Mammary epithelial cell (primary cell): ENCODE measurements at regions of chr17 and their contacts with region 1.

Region 1: GRCh38 chr17:69523244-69523861 is 108.9 kb downstream of the MAP2K6 start:
- DNase-seq: peak; percentile 44
- H3K4me3 ChIP-seq: no peak overlapping the region
- H3K27ac ChIP-seq: no peak overlapping the region
- H3K4me1 ChIP-seq: no peaks in the 10 kb centered on the region
- H3K27me3 ChIP-seq: no peaks in the 10 kb centered on the region
- CTCF ChIP-seq: peak; percentile 72 to 85

Region 2: GRCh38 chr17:68771867-68772515 is 751.4 kb before region 1 on chr17:
- CTCF ChIA-PET with region 1: no interaction called
- dilution Hi-C with region 1: no loop called
- in situ Hi-C with region 1: no loop called
- intact Hi-C with region 1: loop called (anchors 1 kb)
- DNase-seq: peak; percentile 39
- H3K4me3 ChIP-seq: peak overlapping the region in 2 of 3 experiments; percentile 8 to 23
- H3K27ac ChIP-seq: no peak overlapping the region
- H3K4me1 ChIP-seq: no peaks in the 10 kb centered on the region
- H3K27me3 ChIP-seq: no peaks in the 10 kb centered on the region
- CTCF ChIP-seq: peak; percentile 68 to 70

Region 3: DNA sequence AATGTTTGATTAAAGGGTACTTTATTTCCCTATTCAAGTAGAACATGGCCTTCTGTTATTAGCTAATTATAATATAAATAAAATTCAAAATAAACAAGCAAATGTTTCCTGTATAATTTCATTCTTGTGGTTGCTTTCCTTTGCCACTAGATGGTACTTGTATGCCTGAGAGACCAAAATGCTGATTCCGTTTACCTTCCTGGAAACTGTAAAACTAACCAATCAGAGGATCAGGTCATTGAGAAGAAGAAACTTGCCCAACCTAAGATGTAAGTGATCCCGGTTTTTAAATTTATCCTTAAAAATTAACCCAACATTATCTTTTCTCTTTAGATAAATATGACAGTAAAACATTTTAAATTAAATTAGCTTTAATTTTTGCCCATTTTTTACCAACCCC is 188.3 kb before region 1 on chr17:
- CTCF ChIA-PET with region 1: interaction called, 3 read pairs
- dilution Hi-C with region 1: no loop called
- in situ Hi-C with region 1: loop called (anchors 5 to 10 kb)
- intact Hi-C with region 1: loop called (anchors 1 kb)
- DNase-seq: peak; percentile 51
- H3K4me3 ChIP-seq: no peak overlapping the region
- H3K27ac ChIP-seq: no peak overlapping the region
- H3K4me1 ChIP-seq: no peaks in the 10 kb centered on the region
- H3K27me3 ChIP-seq: no peaks in the 10 kb centered on the region
- CTCF ChIP-seq: peak; percentile 38 to 74

Region 4: DNA sequence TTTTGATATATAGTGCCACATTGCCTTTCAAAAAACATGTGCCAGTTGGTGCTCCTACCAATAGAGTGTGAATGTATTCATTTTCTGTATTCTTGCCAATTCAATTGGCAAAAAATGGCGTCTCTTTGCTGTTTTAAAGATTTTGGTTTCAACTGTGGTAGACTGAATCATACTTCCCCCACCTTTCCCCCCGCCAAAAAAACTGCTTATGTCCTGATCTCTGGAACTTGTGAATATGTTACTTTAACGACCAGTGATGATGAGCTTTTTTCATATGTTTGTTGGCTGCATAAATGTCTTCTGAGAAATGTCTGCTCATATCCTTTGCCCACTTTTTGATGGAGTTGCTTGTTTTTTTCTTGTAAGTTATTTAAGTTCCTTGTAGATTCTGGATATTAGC is 226.6 kb after region 1 on chr17:
- CTCF ChIA-PET with region 1: no interaction called
- dilution Hi-C with region 1: no loop called
- in situ Hi-C with region 1: no loop called
- intact Hi-C with region 1: no loop called
- DNase-seq: no peak
- H3K4me3 ChIP-seq: no peak overlapping the region
- H3K27ac ChIP-seq: no peak overlapping the region
- H3K4me1 ChIP-seq: no peaks in the 10 kb centered on the region
- H3K27me3 ChIP-seq: no peaks in the 10 kb centered on the region
- CTCF ChIP-seq: no peak

Region 5: DNA sequence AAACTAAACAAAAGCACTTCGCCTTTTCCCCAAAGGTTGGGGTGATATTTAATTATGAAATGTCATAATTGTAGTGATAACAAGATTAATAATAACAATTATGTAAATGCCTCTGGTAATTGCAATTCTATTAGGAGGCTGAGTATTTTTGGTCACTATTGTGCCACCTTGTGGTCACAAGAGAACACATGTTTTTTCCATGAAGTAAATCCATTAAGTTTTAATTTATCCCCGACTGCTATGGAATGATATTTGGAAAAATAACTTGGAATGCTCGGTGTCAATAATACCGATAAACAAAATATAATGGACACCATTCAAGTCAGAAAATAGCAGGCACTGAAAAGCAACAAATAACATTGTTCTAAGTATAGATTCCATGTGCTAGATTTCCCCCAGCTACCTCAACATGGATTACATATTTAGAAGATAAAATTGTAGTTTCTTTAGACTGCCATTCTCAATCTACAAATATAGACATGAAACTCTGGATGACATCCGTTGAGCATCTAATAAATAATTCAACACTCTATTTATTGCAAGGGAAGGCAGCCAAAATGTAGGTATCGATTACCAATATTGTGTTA is 621.0 kb after region 1 on chr17:
- CTCF ChIA-PET with region 1: interaction called, 5 read pairs
- dilution Hi-C with region 1: no loop called
- in situ Hi-C with region 1: no loop called
- intact Hi-C with region 1: loop called (anchors 5 kb)
- DNase-seq: peak; percentile 16
- H3K4me3 ChIP-seq: no peak overlapping the region
- H3K27ac ChIP-seq: no peak overlapping the region
- H3K4me1 ChIP-seq: no peaks in the 10 kb centered on the region
- H3K27me3 ChIP-seq: no peaks in the 10 kb centered on the region
- CTCF ChIP-seq: peak; percentile 55 to 66

Region 6: GRCh38 chr17:70622368-70623260 is 1099.3 kb after region 1 on chr17:
- CTCF ChIA-PET with region 1: interaction called, 6 read pairs
- dilution Hi-C with region 1: no loop called
- in situ Hi-C with region 1: loop called in 1 of 2 experiments (anchors 10 kb)
- intact Hi-C with region 1: no loop called
- DNase-seq: peak; percentile 30
- H3K4me3 ChIP-seq: no peak overlapping the region
- H3K27ac ChIP-seq: no peak overlapping the region
- H3K4me1 ChIP-seq: no peaks in the 10 kb centered on the region
- H3K27me3 ChIP-seq: no peaks in the 10 kb centered on the region
- CTCF ChIP-seq: peak; percentile 67 to 85